ENCODE measurements at regions of chr14 and their contacts with region 1.

Region 1: DNA sequence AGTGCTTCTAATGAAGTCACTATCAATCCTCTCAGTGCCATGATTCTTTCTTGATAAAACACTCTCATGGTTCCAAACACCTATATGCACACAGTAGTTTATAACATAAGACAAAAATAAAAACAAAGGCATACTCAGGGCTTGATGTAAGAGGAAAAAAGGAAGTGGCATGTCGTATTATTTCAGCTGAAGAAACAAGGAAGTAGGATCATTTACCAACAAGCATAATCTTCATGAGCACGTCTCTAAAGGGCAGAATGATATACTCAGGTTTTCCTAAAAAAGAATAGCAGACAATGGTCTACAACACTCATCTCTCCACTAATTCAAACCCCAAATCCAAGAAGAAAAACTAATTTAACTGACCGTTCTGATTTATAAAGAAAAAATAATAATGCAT is 33.9 kb downstream of the NUMB start:
- DNase-seq: peak; percentile 48 to 72 (median 69)
- H3K4me3 ChIP-seq: peak overlapping the region in 1 of 3 experiments; percentile 31
- H3K4me3 Mint-ChIP-seq: peak overlapping the region in 1 of 2 donors; percentile 69
- H3K27ac ChIP-seq: peak overlapping the region in 1 of 2 donors; percentile 68
- H3K27ac Mint-ChIP-seq: peak overlapping the region; percentile 78 to 93 (median 87)
- H3K4me1 ChIP-seq: peaks cover 31 to 49% of the 10 kb centered on the region in 2 donors
- H3K4me1 Mint-ChIP-seq: peaks cover 58% of the 10 kb centered on the region
- H3K27me3 ChIP-seq: no peaks in the 10 kb centered on the region
- H3K27me3 Mint-ChIP-seq: no peaks in the 10 kb centered on the region
- CTCF ChIP-seq: no peak

Region 2: GRCh38 chr14:73333031-73333430 is 91.4 kb before region 1 on chr14:
- intact Hi-C with region 1: no loop called
- DNase-seq: no peak
- H3K4me3 ChIP-seq: no peak overlapping the region
- H3K4me3 Mint-ChIP-seq: no peak overlapping the region
- H3K27ac ChIP-seq: no peak overlapping the region
- H3K27ac Mint-ChIP-seq: no peak overlapping the region
- H3K4me1 ChIP-seq: no peaks in the 10 kb centered on the region
- H3K4me1 Mint-ChIP-seq: no peaks in the 10 kb centered on the region
- H3K27me3 ChIP-seq: no peaks in the 10 kb centered on the region
- H3K27me3 Mint-ChIP-seq: peaks cover 0 to under 1% (median 0%) of the 10 kb centered on the region in 3 donors
- CTCF ChIP-seq: no peak

Region 3: GRCh38 chr14:73467377-73467776 is 42.9 kb after region 1 on chr14:
- intact Hi-C with region 1: loop called (anchors 5 to 10 kb)
- DNase-seq: peak; percentile 89 to 94 (median 90)
- H3K4me3 ChIP-seq: peak overlapping the region in 1 of 3 experiments; percentile 76
- H3K4me3 Mint-ChIP-seq: peak overlapping the region; percentile 57 to 69
- H3K27ac ChIP-seq: peak overlapping the region; percentile 89 to 98
- H3K27ac Mint-ChIP-seq: peak overlapping the region; percentile 98 to 100 (median 100)
- H3K4me1 ChIP-seq: peaks cover 59 to 83% of the 10 kb centered on the region in 2 donors
- H3K4me1 Mint-ChIP-seq: peaks cover 69% of the 10 kb centered on the region
- H3K27me3 ChIP-seq: no peaks in the 10 kb centered on the region
- H3K27me3 Mint-ChIP-seq: peaks cover 0 to 2% (median 0%) of the 10 kb centered on the region in 3 donors
- CTCF ChIP-seq: no peak

Measured in CD14-positive monocyte (primary cell).